Activated T-helper 2 cell treated with anti-CD3 and anti-CD28 coated beads, Interferon-gamma antibody, Interleukin-2, Interleukin-4, amounts not matched to agents 10 μg/mL and 5 μg/mL and 100 μg/mL, durations not matched to agents 14 hours and 24 hours and 36 hours (primary cell): ENCODE measurements at regions of chr13 and their contacts with region 1.

Region 1: GRCh38 chr13:100392709-100393641 is 195.6 kb downstream of the GGACT start:
- DNase-seq: peak; percentile 41
- H3K4me3 Mint-ChIP-seq: peak overlapping the region; percentile 11
- H3K27ac Mint-ChIP-seq: peak overlapping the region; percentile 67
- H3K4me1 Mint-ChIP-seq: peaks cover 30% of the 10 kb centered on the region
- H3K27me3 Mint-ChIP-seq: no peaks in the 10 kb centered on the region

Region 2: GRCh38 chr13:99995589-99996380 is 397.2 kb before region 1 on chr13:
- intact Hi-C with region 1: loop called (anchors 2 kb)
- DNase-seq: no peak
- H3K4me3 Mint-ChIP-seq: no peak overlapping the region
- H3K27ac Mint-ChIP-seq: peak overlapping the region; percentile 17
- H3K4me1 Mint-ChIP-seq: peaks cover 12% of the 10 kb centered on the region
- H3K27me3 Mint-ChIP-seq: peaks cover 75% of the 10 kb centered on the region

Region 3: DNA sequence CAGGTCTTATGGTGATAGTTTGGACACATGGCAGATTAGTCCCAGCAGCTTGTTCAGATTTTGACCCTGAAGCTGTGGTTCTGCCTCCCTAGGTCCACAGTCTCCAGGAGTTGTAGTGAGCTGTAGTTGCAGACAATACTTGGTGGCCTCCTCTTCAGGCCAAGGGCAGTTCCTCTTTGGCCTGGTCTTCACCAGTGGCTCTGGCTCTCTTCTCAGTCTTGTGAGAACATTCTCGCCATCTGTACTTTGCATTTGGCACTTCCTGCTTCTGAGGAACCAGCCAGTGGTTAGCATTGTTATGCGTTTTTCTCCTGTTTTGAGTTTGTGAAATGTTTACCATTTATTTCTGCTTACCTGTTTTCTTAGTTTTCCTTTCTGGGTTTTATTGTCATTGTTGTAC is 263.4 kb before region 1 on chr13:
- intact Hi-C with region 1: loop called (anchors 2 kb)
- DNase-seq: no peak
- H3K4me3 Mint-ChIP-seq: no peak overlapping the region
- H3K27ac Mint-ChIP-seq: peak overlapping the region; percentile 18
- H3K4me1 Mint-ChIP-seq: peaks cover 26% of the 10 kb centered on the region
- H3K27me3 Mint-ChIP-seq: no peaks in the 10 kb centered on the region

Region 4: DNA sequence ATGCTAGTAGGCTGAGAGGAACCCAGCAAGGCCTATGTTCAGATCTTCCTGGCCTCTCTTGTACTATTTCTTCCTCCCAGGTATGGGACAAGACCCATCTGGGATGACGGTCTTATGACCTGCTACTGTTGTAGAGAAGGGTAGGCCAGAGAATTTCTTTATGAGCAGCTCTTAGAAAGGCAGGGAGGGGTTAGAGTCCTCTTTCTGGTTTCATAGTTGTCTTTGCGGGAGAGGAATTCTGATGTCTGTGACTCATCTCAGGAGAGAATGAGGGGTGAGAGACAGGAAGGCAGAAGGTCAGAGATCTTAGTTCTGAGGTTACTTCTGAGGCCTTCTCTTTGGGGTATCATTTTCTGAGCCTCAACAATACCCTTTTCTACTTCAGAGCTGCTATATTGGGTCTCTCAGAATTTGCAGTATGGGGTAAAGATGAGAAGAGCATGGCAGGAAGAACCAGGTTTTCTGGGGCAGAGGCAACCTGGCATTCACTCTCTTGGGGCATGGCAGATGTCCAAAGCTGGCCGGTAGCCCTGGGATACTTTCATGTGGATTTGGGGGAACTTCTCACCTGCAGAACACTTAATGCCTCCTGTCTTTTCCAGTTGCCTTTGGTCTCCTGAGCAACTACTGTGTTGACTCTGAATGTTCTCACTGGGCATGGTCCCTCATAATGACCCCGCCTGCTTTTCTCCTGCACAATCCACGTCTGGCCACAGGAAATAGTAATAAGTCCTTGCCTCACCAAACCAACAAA is 41.2 kb after region 1 on chr13:
- intact Hi-C with region 1: loop called (anchors 1 kb)
- DNase-seq: no peak
- H3K4me3 Mint-ChIP-seq: no peak overlapping the region
- H3K27ac Mint-ChIP-seq: peak overlapping the region; percentile 35
- H3K4me1 Mint-ChIP-seq: peaks cover 36% of the 10 kb centered on the region
- H3K27me3 Mint-ChIP-seq: no peaks in the 10 kb centered on the region

Region 5: DNA sequence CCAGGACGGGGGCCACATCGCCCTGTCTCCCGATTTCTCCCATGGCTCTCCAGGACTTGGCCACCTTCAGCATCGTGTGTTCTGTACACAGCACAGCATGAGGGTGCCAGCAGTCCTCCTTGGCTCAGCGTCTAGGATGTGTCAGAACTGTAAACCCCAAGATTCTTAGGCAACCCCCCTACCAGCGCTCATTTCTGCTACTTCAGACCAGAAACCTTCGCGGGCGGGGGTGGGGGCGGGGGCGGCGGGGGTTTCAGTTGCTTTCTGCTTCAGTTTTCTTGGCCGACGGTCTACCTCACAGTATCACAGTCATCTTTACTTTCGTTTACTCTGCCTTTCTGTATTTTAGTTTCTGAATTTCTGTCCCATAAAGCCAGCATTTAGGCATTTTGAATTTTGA is 113.2 kb after region 1 on chr13:
- intact Hi-C with region 1: loop called (anchors 1 kb)
- DNase-seq: no peak
- H3K4me3 Mint-ChIP-seq: peak overlapping the region; percentile 65
- H3K27ac Mint-ChIP-seq: peak overlapping the region; percentile 81
- H3K4me1 Mint-ChIP-seq: peaks cover 20% of the 10 kb centered on the region
- H3K27me3 Mint-ChIP-seq: peaks cover 44% of the 10 kb centered on the region

Region 6: GRCh38 chr13:101529422-101529821 is 1136.4 kb after region 1 on chr13:
- intact Hi-C with region 1: no loop called
- DNase-seq: no peak
- H3K4me3 Mint-ChIP-seq: no peak overlapping the region
- H3K27ac Mint-ChIP-seq: no peak overlapping the region
- H3K4me1 Mint-ChIP-seq: peaks cover 3% of the 10 kb centered on the region
- H3K27me3 Mint-ChIP-seq: peaks cover 8% of the 10 kb centered on the region